Breast epithelium (tissue), 4 donors: ENCODE measurements at regions of chr6 and their contacts with region 1.

Region 1: GRCh38 chr6:169029861-169030260 is 223.8 kb downstream of the THBS2 start:
- DNase-seq: no peak
- H3K4me3 ChIP-seq: no peak overlapping the region
- H3K27ac ChIP-seq: no peak overlapping the region
- H3K4me1 ChIP-seq: no peaks in the 10 kb centered on the region
- H3K27me3 ChIP-seq: no peaks in the 10 kb centered on the region
- CTCF ChIP-seq: no peak
- POLR2A ChIP-seq: no peak

Region 2: GRCh38 chr6:168985705-168986104 is 44.2 kb before region 1 on chr6:
- intact Hi-C with region 1: loop called (anchors 2 kb)
- DNase-seq: no peak
- H3K4me3 ChIP-seq: no peak overlapping the region
- H3K27ac ChIP-seq: no peak overlapping the region
- H3K4me1 ChIP-seq: no peaks in the 10 kb centered on the region
- H3K27me3 ChIP-seq: no peaks in the 10 kb centered on the region
- CTCF ChIP-seq: no peak
- POLR2A ChIP-seq: no peak

Region 3: GRCh38 chr6:169046483-169047192 is 16.8 kb after region 1 on chr6:
- intact Hi-C with region 1: no loop called
- DNase-seq: no peak
- H3K4me3 ChIP-seq: no peak overlapping the region
- H3K27ac ChIP-seq: peak overlapping the region in 1 of 2 donors; percentile 4
- H3K4me1 ChIP-seq: no peaks in the 10 kb centered on the region
- H3K27me3 ChIP-seq: no peaks in the 10 kb centered on the region
- CTCF ChIP-seq: no peak
- POLR2A ChIP-seq: no peak